Activated T-helper 1 cell treated with anti-CD3 and anti-CD28 coated beads, Interleukin-12 subunit alpha, Interleukin-12 subunit beta, Interleukin-2, Interleukin-4 antibody, amounts not matched to agents 30 ng/mL and 10 ng/mL and 1 ng/mL, durations not matched to agents 14 hours and 24 hours and 36 hours (primary cell): ENCODE measurements at regions of chr6 and their contacts with region 1.

Region 1: DNA sequence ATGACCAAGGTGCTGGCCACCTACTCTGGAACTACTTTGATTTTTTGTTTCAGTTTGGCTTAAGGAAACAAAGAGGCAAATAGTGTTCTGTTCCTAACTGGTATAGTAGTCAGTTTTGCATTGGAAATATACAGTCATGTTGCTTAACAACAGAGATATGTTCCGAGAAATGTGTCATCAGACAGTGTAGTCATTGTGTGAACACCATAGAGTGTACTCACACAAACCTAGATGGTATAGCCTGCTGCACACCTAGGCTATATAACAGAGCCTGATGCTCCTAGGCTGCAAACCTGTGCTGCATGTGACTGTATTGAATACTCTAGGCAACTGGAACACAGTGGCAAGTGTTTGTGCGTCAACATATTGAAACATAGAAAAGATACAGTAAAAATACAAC is 80.4 kb downstream of the ARID1B start:
- DNase-seq: peak; percentile 11
- H3K4me3 Mint-ChIP-seq: no peak overlapping the region
- H3K27ac Mint-ChIP-seq: peak overlapping the region; percentile 90
- H3K4me1 Mint-ChIP-seq: peaks cover 56% of the 10 kb centered on the region
- H3K27me3 Mint-ChIP-seq: no peaks in the 10 kb centered on the region

Region 2: DNA sequence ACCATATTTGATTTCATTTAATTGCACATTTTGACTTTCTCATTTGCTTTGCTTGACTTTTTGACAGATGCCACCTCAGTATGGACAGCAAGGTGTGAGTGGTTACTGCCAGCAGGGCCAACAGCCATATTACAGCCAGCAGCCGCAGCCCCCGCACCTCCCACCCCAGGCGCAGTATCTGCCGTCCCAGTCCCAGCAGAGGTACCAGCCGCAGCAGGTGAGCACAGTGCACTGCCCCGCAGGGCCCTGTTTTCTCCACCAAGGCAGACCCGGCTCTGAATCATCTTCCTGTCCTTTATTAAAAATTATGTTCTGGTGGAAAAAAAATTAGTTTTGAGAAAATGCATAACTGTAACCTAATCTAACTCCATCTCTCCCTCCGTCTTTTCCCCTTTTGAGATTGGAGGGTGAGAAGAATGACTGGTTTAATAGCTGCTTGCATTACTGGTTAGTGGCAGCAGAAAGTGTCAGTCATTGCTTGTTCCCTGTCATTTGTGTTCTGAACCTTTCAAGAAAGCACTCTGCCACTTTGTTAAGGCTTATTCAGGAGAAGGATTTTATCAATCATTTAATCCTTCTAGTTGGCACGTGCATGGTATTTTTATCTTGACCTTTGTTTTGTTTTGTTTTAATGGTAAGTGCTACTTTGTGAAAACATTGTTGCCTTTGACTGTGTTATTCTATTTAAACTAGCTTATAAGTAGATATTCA is 43.9 kb after region 1 on chr6:
- intact Hi-C with region 1: no loop called
- DNase-seq: no peak
- H3K4me3 Mint-ChIP-seq: no peak overlapping the region
- H3K27ac Mint-ChIP-seq: no peak overlapping the region
- H3K4me1 Mint-ChIP-seq: peaks cover 22% of the 10 kb centered on the region
- H3K27me3 Mint-ChIP-seq: no peaks in the 10 kb centered on the region

Region 3: DNA sequence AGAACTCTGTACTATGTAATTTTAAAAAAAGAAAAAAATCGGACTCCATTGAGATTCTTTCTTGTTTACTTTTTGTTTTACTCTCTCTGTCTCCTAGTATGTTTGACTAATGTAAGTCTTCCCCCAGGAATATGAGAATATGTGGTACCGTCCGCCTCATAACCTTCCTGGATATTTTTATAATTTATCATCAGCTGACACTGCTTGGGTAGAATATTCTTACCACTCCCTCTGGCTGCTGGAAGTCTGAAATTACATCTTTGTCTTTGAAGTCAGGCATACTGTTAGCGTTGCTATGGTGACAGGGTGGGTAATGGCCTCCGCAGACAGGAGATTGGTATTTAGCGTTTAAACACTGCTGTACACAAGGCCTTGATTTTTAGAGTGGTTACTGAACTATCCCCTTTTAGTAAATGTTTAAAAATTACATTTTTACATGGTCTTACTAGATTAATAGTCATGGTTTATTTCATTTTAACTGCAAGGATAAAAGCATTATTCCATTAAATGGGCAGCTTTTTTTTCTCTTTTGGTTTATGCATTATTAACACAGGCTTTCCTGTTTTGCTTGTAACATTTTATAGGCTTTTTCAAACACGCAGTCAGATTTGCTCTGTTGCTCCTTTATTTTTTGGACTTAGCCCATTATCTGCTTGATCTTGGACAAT is 96.0 kb after region 1 on chr6:
- intact Hi-C with region 1: loop called (anchors 2 kb)
- DNase-seq: peak; percentile 14
- H3K4me3 Mint-ChIP-seq: no peak overlapping the region
- H3K27ac Mint-ChIP-seq: peak overlapping the region; percentile 45
- H3K4me1 Mint-ChIP-seq: peaks cover 51% of the 10 kb centered on the region
- H3K27me3 Mint-ChIP-seq: no peaks in the 10 kb centered on the region

Region 4: GRCh38 chr6:157054531-157054979 is 197.0 kb after region 1 on chr6:
- intact Hi-C with region 1: loop called (anchors 1 kb)
- DNase-seq: peak; percentile 35
- H3K4me3 Mint-ChIP-seq: peak overlapping the region; percentile 53
- H3K27ac Mint-ChIP-seq: peak overlapping the region; percentile 95
- H3K4me1 Mint-ChIP-seq: peaks cover 33% of the 10 kb centered on the region
- H3K27me3 Mint-ChIP-seq: no peaks in the 10 kb centered on the region

Region 5: GRCh38 chr6:157107915-157108651 is 250.5 kb after region 1 on chr6:
- intact Hi-C with region 1: loop called (anchors 1 kb)
- DNase-seq: no peak
- H3K4me3 Mint-ChIP-seq: no peak overlapping the region
- H3K27ac Mint-ChIP-seq: peak overlapping the region; percentile 73
- H3K4me1 Mint-ChIP-seq: peaks cover 55% of the 10 kb centered on the region
- H3K27me3 Mint-ChIP-seq: no peaks in the 10 kb centered on the region